ENCODE measurements at regions of chr12 and their contacts with region 1.

Region 1: GRCh38 chr12:57063991-57064685 is 14.2 kb upstream of the MYO1A start:
- H3K4me3 ChIP-seq: no peak overlapping the region
- H3K27ac ChIP-seq: no peak overlapping the region
- H3K4me1 ChIP-seq: no peaks in the 10 kb centered on the region
- CTCF ChIP-seq: no peak

Region 2: GRCh38 chr12:56884421-56884820 is 179.7 kb before region 1 on chr12:
- CTCF ChIA-PET with region 1: no interaction called
- POLR2A ChIA-PET with region 1: no interaction called
- H3K4me3 ChIP-seq: no peak overlapping the region
- H3K27ac ChIP-seq: no peak overlapping the region
- H3K4me1 ChIP-seq: no peaks in the 10 kb centered on the region
- CTCF ChIP-seq: no peak

Region 3: GRCh38 chr12:57046947-57047890 is 16.9 kb before region 1 on chr12:
- CTCF ChIA-PET with region 1: interaction called, 10 read pairs
- POLR2A ChIA-PET with region 1: no interaction called
- H3K4me3 ChIP-seq: no peak overlapping the region
- H3K27ac ChIP-seq: no peak overlapping the region
- H3K4me1 ChIP-seq: no peaks in the 10 kb centered on the region
- CTCF ChIP-seq: no peak

Region 4: GRCh38 chr12:57088459-57089248 is 24.5 kb after region 1 on chr12 and contains the start of gene NAB2:
- CTCF ChIA-PET with region 1: interaction called, 40 read pairs
- POLR2A ChIA-PET with region 1: interaction called, 7 read pairs
- H3K4me3 ChIP-seq: peak within 1 kb of the TSS; percentile 84
- H3K27ac ChIP-seq: peak within 1 kb of the TSS; percentile 80
- H3K4me1 ChIP-seq: peaks cover 12% of the 10 kb centered on the region
- CTCF ChIP-seq: no peak; the same call in 1 of the 2 replicates

Measured in HEK293 (cell line).